ENCODE measurements at regions of chr11 and their contacts with region 1.

Region 1: GRCh38 chr11:62340269-62340901 is 3.1 kb downstream of the ASRGL1 start:
- DNase-seq: peak; percentile 64
- H3K4me3 Mint-ChIP-seq: no peak overlapping the region
- H3K27ac Mint-ChIP-seq: no peak overlapping the region
- H3K4me1 Mint-ChIP-seq: peaks cover 13% of the 10 kb centered on the region
- H3K27me3 Mint-ChIP-seq: peaks cover 35% of the 10 kb centered on the region

Region 2: DNA sequence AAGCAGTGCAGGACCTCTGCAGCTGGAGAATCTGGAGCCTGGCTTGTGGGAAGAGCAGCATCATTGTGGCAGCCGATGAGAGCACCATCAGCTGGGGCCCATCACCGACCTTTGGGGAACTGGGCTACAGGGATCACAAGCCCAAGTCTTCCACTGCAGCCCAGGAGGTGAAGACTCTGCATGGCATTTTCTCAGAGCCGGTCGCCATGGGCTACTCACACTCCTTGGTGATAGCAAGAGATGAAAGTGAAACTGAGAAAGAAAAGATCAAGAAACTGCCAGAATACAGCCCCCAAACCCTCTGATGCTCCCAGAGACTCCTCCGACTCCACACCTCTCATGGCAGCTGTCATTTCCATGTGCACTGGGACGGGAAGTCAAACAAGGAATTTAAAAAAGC is 32.5 kb after region 1 on chr11:
- CTCF ChIA-PET with region 1: interaction called, 16 read pairs
- POLR2A ChIA-PET with region 1: no interaction called
- DNase-seq: no peak
- H3K4me3 Mint-ChIP-seq: no peak overlapping the region
- H3K27ac Mint-ChIP-seq: no peak overlapping the region
- H3K4me1 Mint-ChIP-seq: peaks cover 25% of the 10 kb centered on the region
- H3K27me3 Mint-ChIP-seq: peaks cover 4% of the 10 kb centered on the region

Measured in activated CD4-positive, alpha-beta memory T cell treated with anti-CD3 and anti-CD28 coated beads, Interleukin-2, amount 10 ng/mL, durations not matched to agents 7 days and 5 days (primary cell).